Mammary epithelial cell (primary cell): ENCODE measurements at regions of chr7 and their contacts with region 1.

Region 1: GRCh38 chr7:7968543-7969305 is at the start of gene GLCCI1:
- DNase-seq: peak; percentile 97
- H3K4me3 ChIP-seq: peak within 1 kb of the TSS; percentile 61 to 98 (median 69)
- H3K27ac ChIP-seq: peak within 1 kb of the TSS; percentile 58
- H3K4me1 ChIP-seq: peaks cover 2% of the 10 kb centered on the region
- H3K27me3 ChIP-seq: no peaks in the 10 kb centered on the region
- CTCF ChIP-seq: no peak
- total RNA-seq, gene GLCCI1: 7.0 to 14.6 TPM

Region 2: GRCh38 chr7:7681179-7681935 is 287.4 kb before region 1 on chr7:
- CTCF ChIA-PET with region 1: no interaction called
- dilution Hi-C with region 1: no loop called
- in situ Hi-C with region 1: no loop called
- intact Hi-C with region 1: loop called (anchors 2 kb)
- DNase-seq: peak; percentile 66
- H3K4me3 ChIP-seq: no peak overlapping the region
- H3K27ac ChIP-seq: no peak overlapping the region
- H3K4me1 ChIP-seq: peaks cover 5% of the 10 kb centered on the region
- H3K27me3 ChIP-seq: no peaks in the 10 kb centered on the region
- CTCF ChIP-seq: peak; percentile 60 to 61

Region 3: DNA sequence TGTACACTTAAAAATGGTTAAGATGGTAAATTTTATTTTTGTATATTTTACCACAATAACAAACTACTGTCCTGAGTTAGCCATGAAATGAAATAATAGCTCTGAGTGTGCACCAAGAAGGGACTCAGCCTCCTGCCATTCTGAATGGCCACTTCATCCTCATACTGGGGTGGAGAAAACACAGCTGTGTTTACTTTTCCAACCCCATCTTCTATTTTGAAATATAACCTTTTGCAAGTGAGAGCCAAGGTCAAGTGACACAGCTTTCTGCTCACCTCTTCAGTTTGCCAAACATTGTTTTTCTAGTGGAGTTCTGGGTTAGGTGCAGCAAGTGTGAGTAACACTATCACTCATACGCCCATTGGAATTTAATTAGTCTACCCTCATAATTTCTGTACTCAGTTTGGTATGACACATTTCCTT is 107.5 kb before region 1 on chr7:
- CTCF ChIA-PET with region 1: interaction called, 3 read pairs
- dilution Hi-C with region 1: no loop called
- in situ Hi-C with region 1: no loop called
- intact Hi-C with region 1: loop called (anchors 5 kb)
- DNase-seq: peak; percentile 95
- H3K4me3 ChIP-seq: no peak overlapping the region
- H3K27ac ChIP-seq: peak overlapping the region; percentile 73
- H3K4me1 ChIP-seq: peaks cover 11% of the 10 kb centered on the region
- H3K27me3 ChIP-seq: no peaks in the 10 kb centered on the region
- CTCF ChIP-seq: no peak

Region 4: DNA sequence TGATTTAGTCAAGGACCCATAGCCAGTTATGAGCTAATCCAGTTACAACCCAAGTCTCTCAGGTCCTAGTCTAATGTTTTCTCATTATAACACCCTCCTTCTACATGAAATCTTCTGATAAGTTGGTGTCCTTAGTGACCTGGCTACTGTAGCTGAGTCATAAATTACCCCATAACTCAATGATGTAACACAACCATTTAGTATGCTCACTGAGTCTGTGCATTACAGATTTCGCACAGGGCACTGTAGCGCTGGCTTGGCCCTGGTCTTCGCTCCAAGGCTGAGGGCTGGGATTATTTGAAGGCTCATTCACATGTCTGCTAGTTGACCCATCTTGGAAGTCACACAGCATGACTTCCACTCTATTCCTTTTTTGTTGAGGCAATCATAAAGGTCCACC is 36.1 kb before region 1 on chr7:
- CTCF ChIA-PET with region 1: no interaction called
- dilution Hi-C with region 1: no loop called
- in situ Hi-C with region 1: no loop called
- intact Hi-C with region 1: no loop called
- DNase-seq: no peak
- H3K4me3 ChIP-seq: no peak overlapping the region
- H3K27ac ChIP-seq: no peak overlapping the region
- H3K4me1 ChIP-seq: no peaks in the 10 kb centered on the region
- H3K27me3 ChIP-seq: no peaks in the 10 kb centered on the region
- CTCF ChIP-seq: no peak

Region 5: GRCh38 chr7:7989985-7990761 is 21.4 kb after region 1 on chr7:
- CTCF ChIA-PET with region 1: no interaction called
- dilution Hi-C with region 1: no loop called
- in situ Hi-C with region 1: no loop called
- intact Hi-C with region 1: loop called (anchors 2 kb)
- DNase-seq: no peak
- H3K4me3 ChIP-seq: no peak overlapping the region
- H3K27ac ChIP-seq: no peak overlapping the region
- H3K4me1 ChIP-seq: no peaks in the 10 kb centered on the region
- H3K27me3 ChIP-seq: no peaks in the 10 kb centered on the region
- CTCF ChIP-seq: no peak

Region 6: GRCh38 chr7:8217200-8218068 is 248.7 kb after region 1 on chr7:
- CTCF ChIA-PET with region 1: no interaction called
- dilution Hi-C with region 1: no loop called
- in situ Hi-C with region 1: no loop called
- intact Hi-C with region 1: loop called (anchors 10 kb)
- DNase-seq: peak; percentile 36
- H3K4me3 ChIP-seq: no peak overlapping the region
- H3K27ac ChIP-seq: no peak overlapping the region
- H3K4me1 ChIP-seq: no peaks in the 10 kb centered on the region
- H3K27me3 ChIP-seq: no peaks in the 10 kb centered on the region
- CTCF ChIP-seq: peak; percentile 53